Transverse colon (tissue), 4 donors: ENCODE measurements at regions of chr9 and their contacts with region 1.

Region 1: GRCh38 chr9:113828221-113828620 is 47.9 kb upstream of the ZNF618 start:
- DNase-seq: no peak
- H3K4me3 ChIP-seq: no peak overlapping the region
- H3K27ac ChIP-seq: no peak overlapping the region
- H3K4me1 ChIP-seq: no peaks in the 10 kb centered on the region
- H3K27me3 ChIP-seq: no peaks in the 10 kb centered on the region
- CTCF ChIP-seq: no peak
- EP300 ChIP-seq: no peak
- POLR2A ChIP-seq: no peak

Region 2: DNA sequence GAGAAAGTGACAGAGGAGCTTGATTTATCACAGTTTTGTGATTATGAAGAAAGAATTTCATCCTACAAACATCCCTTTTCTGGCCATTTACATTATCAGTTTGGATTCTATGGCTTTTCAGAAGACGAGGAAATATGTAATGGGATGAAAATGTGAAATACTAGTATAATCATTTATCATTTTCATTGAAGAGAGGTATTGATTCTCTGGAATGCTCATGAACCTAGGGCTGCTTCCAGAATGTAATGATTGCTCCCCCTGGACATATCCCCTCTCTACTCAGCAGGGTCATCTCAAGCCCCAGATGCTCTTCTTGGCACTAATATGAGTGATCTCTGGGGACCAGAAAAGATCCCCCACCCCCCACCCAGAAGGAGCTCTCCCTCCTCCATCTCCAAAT is 58.8 kb before region 1 on chr9:
- in situ Hi-C with region 1: loop called in 1 of 4 experiments (anchors 10 kb)
- intact Hi-C with region 1: no loop called
- DNase-seq: no peak
- H3K4me3 ChIP-seq: no peak overlapping the region
- H3K27ac ChIP-seq: no peak overlapping the region
- H3K4me1 ChIP-seq: no peaks in the 10 kb centered on the region
- H3K27me3 ChIP-seq: no peaks in the 10 kb centered on the region
- CTCF ChIP-seq: no peak
- EP300 ChIP-seq: no peak
- POLR2A ChIP-seq: no peak